AG04449 (cell line): ENCODE measurements at regions of chr9 and their contacts with region 1.

Region 1: DNA sequence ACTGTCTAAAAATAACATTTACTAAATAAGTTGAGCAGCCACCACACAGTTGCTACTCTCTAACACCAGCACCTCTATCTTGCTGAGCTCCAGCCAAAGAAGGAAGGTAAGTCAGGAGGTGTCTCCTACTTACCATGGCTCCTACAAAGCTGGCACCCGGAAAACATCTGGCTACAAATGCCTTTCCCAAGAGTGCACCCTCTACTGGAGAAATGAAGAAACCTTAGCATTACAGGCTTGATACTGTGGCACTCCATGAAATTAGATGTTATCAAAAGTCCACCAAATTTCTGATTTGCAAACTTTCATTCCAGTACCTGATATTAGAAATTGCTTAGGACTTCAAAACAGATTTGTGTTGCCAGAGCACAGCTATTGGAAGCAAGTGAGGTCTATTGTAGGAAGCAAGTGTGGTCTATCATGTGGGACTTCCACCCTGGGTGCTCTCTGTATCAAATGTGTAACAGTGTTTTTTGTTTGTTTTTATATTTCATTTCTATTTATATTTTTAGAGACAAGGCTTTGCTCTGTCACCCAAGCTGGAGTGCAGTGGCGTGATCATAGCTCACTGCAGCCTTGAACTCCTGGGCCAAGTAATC is 25.7 kb upstream of the RFK start:
- DNase-seq: no peak
- H3K4me3 ChIP-seq: no peak overlapping the region
- CTCF ChIP-seq: peak; percentile 44

Region 2: GRCh38 chr9:76403352-76403751 is 16.5 kb before region 1 on chr9:
- CTCF ChIA-PET with region 1: interaction called, 16 read pairs
- POLR2A ChIA-PET with region 1: no interaction called
- DNase-seq: peak; percentile 64
- H3K4me3 ChIP-seq: no peak overlapping the region
- CTCF ChIP-seq: peak; percentile 43

Region 3: DNA sequence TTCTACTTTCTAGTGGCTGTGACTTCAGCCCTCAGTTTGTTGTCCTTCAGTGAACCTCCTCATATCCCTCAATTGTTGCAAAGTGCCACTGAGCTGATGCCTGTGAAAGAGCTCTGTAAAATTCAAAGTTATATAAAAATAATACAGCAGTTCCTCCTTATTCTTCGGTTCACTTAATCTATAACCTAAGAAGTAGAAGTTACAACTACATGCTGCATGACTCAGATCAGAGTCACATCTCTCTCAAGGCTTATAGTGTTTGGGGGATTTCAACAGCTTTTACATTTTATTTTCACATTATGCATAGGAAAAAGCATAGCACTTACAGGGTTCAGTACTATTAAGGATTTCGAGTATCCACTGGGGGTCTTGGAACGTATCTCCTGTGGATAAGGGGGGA is 14.0 kb after region 1 on chr9:
- CTCF ChIA-PET with region 1: interaction called, 10 read pairs
- POLR2A ChIA-PET with region 1: no interaction called
- DNase-seq: no peak
- H3K4me3 ChIP-seq: no peak overlapping the region
- CTCF ChIP-seq: no peak